ENCODE measurements at regions of chr12 and their contacts with region 1.

Region 1: GRCh38 chr12:70744133-70744532 is 106.9 kb upstream of the PTPRB start:
- DNase-seq: no peak
- ATAC-seq: no peak
- H3K4me3 ChIP-seq: no peak overlapping the region
- H3K27ac ChIP-seq: no peak overlapping the region
- H3K4me1 ChIP-seq: no peaks in the 10 kb centered on the region
- H3K27me3 ChIP-seq: no peaks in the 10 kb centered on the region; the same call in 1 of the 2 replicates
- CTCF ChIP-seq: no peak

Region 2: DNA sequence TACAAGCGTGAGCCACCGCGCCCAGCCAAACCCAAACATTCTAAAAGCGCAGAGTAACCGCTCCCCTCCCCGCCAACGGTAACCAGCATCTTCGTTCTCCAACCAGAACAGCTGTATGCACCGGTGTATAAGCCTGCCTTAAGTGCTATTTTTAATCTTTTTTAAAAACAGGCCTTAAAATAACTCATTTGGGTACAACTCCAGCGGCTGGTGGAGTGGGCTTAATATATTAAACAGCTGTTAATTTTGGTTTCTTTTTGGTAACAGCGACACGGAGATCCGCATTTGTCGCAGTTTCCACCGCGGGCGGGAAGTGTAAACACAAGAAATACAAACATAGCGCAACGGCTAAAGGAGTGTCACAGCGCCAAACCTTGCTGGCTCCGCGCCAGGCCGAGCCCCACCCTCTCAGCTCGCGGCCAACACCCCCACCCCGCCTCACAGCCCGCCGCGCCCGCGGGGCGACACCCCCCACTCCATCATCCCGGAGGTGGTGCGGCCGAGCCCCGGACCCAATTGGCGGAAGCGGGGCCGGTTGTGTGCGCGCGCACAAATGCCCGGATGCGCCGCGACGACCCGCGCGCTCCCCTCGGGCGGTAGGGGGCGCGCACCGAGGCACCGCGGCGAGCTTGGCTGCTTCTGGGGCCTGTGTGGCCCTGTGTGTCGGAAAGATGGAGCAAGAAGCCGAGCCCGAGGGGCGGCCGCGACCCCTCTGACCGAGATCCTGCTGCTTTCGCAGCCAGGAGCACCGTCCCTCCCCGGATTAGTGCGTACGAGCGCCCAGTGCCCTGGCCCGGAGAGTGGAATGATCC is 1936.4 kb before region 1 on chr12 and contains the start of gene MDM2:
- CTCF ChIA-PET with region 1: no interaction called
- POLR2A ChIA-PET with region 1: interaction called, 12 read pairs
- in situ Hi-C with region 1: no loop called
- intact Hi-C with region 1: no loop called
- DNase-seq: no peak
- ATAC-seq: peak; percentile 92
- H3K4me3 ChIP-seq: peak within 1 kb of the TSS; percentile 68 to 96
- H3K27ac ChIP-seq: peak within 1 kb of the TSS; percentile 94
- H3K4me1 ChIP-seq: peaks cover 12% of the 10 kb centered on the region
- H3K27me3 ChIP-seq: no peaks in the 10 kb centered on the region
- CTCF ChIP-seq: peak; percentile 88
- total RNA-seq, gene MDM2: 101 TPM

Region 3: GRCh38 chr12:69792533-69792932 is 951.6 kb before region 1 on chr12:
- CTCF ChIA-PET with region 1: no interaction called
- POLR2A ChIA-PET with region 1: no interaction called
- in situ Hi-C with region 1: no loop called
- intact Hi-C with region 1: no loop called
- DNase-seq: no peak
- ATAC-seq: no peak
- H3K4me3 ChIP-seq: no peak overlapping the region
- H3K27ac ChIP-seq: no peak overlapping the region
- H3K4me1 ChIP-seq: no peaks in the 10 kb centered on the region
- H3K27me3 ChIP-seq: no peaks in the 10 kb centered on the region
- CTCF ChIP-seq: no peak

Region 4: DNA sequence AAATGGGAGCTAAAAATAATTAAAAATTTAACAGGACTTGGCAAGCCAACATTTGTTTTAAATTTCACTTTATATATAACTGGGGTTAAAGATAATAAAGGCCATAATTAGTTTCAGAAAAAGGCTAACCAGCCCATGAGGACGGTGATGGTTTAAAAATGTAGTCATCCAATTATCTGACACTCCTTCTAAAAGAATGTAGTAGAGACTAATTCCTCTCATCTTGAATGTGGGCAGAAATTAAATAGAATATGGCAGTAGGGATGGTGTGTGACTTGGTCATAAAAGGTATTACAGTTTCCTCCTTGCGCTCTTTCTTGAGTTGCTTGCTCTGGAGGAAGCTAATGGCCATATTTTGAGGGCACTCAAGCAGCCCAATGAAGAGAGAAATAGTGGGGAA is 57.8 kb before region 1 on chr12:
- CTCF ChIA-PET with region 1: no interaction called
- POLR2A ChIA-PET with region 1: no interaction called
- in situ Hi-C with region 1: no loop called
- intact Hi-C with region 1: no loop called
- DNase-seq: no peak
- ATAC-seq: no peak
- H3K4me3 ChIP-seq: no peak overlapping the region
- H3K27ac ChIP-seq: no peak overlapping the region
- H3K4me1 ChIP-seq: no peaks in the 10 kb centered on the region
- H3K27me3 ChIP-seq: no peaks in the 10 kb centered on the region
- CTCF ChIP-seq: no peak

Region 5: DNA sequence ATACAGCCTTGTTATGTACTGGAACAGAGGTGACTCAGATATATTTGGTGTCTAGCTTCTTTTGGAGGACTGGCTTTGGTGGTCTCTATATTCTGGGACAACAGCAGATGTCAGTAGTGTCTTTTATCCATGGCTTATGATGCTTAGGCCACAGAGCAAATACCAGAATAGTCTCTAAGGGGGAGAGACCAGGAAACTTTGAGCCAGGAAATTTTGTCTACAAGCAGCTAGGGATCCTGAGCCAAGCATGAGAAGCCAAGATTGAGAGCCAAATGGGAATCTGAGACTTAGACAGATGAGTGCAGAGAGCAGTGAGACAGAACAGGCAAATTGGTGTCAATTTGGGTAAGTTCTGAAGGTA is 204.8 kb after region 1 on chr12:
- CTCF ChIA-PET with region 1: no interaction called
- POLR2A ChIA-PET with region 1: no interaction called
- in situ Hi-C with region 1: no loop called
- intact Hi-C with region 1: no loop called
- DNase-seq: no peak
- ATAC-seq: no peak
- H3K4me3 ChIP-seq: no peak overlapping the region
- H3K27ac ChIP-seq: no peak overlapping the region
- H3K4me1 ChIP-seq: no peaks in the 10 kb centered on the region
- H3K27me3 ChIP-seq: no peaks in the 10 kb centered on the region
- CTCF ChIP-seq: no peak